ENCODE measurements at regions of chr1 and their contacts with region 1.

Region 1: DNA sequence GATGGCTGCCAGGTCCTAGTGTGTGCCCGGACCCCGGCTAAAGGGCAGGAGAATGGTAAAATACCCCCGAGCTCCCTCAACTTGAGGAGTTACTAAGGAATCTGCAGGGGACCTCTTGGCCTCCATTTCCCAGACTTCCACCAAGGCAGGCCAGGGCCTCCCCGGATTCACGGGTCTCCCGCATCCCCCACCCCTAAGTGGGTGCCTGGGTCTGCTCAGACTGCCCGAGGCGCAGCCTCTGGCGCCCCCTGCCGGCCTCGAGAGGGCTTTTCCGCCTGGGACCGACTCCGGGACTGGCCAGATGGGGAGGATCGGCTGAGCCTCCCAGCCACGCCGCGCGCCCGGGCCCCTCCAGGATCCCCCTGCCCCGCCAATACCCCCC is 1.7 kb downstream of the PLEKHG5 start:
- DNase-seq: peak; percentile 82
- H3K4me3 Mint-ChIP-seq: peak overlapping the region; percentile 71
- H3K27ac Mint-ChIP-seq: peak overlapping the region; percentile 35
- H3K4me1 Mint-ChIP-seq: peaks cover 20% of the 10 kb centered on the region
- H3K27me3 Mint-ChIP-seq: peaks cover 13% of the 10 kb centered on the region

Region 2: GRCh38 chr1:6367381-6368012 is 122.3 kb before region 1 on chr1:
- CTCF ChIA-PET with region 1: no interaction called
- POLR2A ChIA-PET with region 1: no interaction called
- DNase-seq: no peak
- H3K4me3 Mint-ChIP-seq: no peak overlapping the region
- H3K27ac Mint-ChIP-seq: no peak overlapping the region
- H3K4me1 Mint-ChIP-seq: peaks cover 12% of the 10 kb centered on the region
- H3K27me3 Mint-ChIP-seq: no peaks in the 10 kb centered on the region

Region 3: DNA sequence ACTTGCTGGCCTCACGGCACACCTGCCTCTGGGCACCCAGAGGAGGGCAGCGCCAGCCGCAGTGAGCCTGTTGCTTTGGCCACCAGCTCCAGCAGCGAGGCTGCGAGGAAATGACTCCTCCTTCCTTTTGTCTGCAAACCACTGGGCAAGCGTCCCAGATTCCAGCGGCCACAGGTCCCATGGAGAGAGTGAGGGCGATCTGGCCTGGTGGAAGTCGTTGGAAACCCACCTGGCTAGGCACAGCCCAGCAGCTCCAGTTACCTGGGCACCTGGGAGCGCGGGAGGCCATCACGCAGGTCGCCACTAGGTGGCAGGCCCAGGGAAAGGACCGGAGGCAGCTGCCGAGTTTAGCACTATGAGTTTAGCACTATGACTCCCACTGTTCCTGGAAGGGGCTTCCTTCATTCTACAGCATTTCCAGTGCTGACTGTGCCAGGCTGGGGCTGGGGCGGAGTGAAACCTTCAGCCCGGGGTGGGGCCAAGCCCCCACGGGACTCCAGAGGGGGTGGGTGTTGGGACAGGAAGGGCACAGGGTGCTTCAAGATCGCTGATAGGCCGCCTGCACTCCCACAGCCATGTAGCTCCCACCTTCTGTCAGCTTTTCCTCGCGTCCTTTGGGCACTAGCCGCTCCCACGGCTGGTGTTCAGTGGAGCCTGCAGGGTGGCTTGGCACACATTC is 66.3 kb before region 1 on chr1:
- CTCF ChIA-PET with region 1: interaction called, 14 read pairs
- POLR2A ChIA-PET with region 1: no interaction called
- DNase-seq: peak; percentile 71
- H3K4me3 Mint-ChIP-seq: no peak overlapping the region
- H3K27ac Mint-ChIP-seq: no peak overlapping the region
- H3K4me1 Mint-ChIP-seq: peaks cover 35% of the 10 kb centered on the region
- H3K27me3 Mint-ChIP-seq: peaks cover 49% of the 10 kb centered on the region

Region 4: DNA sequence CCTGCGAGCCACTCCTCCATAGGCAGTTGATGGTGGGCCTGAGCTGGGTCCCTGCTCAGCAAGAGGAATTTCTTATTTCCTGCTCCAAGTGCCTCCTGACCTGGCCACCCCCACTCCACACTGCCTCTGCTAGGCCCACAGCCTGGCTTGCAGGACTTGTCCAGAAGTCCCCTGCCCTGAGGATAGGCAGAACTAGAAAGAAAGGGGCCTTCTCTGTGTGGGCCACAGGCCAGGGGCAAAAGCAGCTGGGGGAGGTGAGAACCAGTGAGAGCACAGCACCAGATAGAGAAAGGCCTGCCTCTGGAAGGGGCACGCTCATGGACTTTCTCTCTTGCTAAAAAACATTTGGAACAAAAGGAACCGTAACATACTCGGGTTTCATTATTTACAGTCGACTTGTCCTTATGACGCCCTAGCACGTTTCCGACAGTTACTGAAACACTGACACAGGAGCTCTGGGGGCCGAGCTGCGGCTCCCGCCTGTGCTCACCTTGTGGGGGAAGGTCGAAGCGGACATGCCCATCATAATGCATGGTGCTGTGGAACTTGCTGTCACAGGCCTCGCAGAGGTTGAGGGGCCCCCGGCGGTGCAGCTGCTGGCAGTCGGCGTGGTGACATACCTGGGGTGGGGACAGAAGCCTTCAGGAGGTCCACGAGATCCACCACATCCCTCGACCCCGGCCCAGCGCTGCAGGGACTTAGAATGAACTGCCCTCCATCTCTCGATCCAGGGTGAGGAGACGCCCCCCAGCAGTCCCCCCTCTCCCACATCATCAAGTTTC is 12.6 kb before region 1 on chr1:
- CTCF ChIA-PET with region 1: interaction called, 10 read pairs
- POLR2A ChIA-PET with region 1: interaction called, 4 read pairs
- DNase-seq: no peak
- H3K4me3 Mint-ChIP-seq: no peak overlapping the region
- H3K27ac Mint-ChIP-seq: no peak overlapping the region
- H3K4me1 Mint-ChIP-seq: no peaks in the 10 kb centered on the region
- H3K27me3 Mint-ChIP-seq: no peaks in the 10 kb centered on the region

Region 5: DNA sequence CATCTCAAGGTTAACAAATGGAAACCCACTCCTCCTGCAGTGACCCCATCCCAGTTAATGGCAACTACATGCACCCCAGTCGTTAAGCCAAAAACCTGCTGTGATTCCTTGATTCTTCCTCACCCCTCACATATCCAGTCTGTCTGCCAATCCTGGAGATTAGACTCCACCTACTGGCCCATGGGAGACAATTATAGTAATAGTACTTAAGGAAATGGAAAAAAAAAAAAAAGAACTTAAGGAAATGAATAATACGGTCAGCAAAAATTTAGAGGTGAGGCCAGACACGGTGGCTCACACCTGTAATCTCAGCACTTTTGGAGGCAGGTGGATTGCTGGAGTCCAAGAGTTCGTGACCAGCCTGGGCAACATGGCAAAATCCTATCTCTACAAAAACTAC is 57.5 kb after region 1 on chr1:
- CTCF ChIA-PET with region 1: interaction called, 30 read pairs
- POLR2A ChIA-PET with region 1: interaction called, 10 read pairs
- DNase-seq: no peak
- H3K4me3 Mint-ChIP-seq: no peak overlapping the region
- H3K27ac Mint-ChIP-seq: peak overlapping the region; percentile 92
- H3K4me1 Mint-ChIP-seq: peaks cover 41% of the 10 kb centered on the region
- H3K27me3 Mint-ChIP-seq: no peaks in the 10 kb centered on the region

Region 6: GRCh38 chr1:6646499-6647148 is 156.8 kb after region 1 on chr1:
- CTCF ChIA-PET with region 1: interaction called, 14 read pairs
- POLR2A ChIA-PET with region 1: interaction called, 6 read pairs
- DNase-seq: peak; percentile 39
- H3K4me3 Mint-ChIP-seq: no peak overlapping the region
- H3K27ac Mint-ChIP-seq: no peak overlapping the region
- H3K4me1 Mint-ChIP-seq: peaks cover 2% of the 10 kb centered on the region
- H3K27me3 Mint-ChIP-seq: no peaks in the 10 kb centered on the region